GM13976 (cell line): ENCODE measurements at regions of chr3 and their contacts with region 1.

Region 1: DNA sequence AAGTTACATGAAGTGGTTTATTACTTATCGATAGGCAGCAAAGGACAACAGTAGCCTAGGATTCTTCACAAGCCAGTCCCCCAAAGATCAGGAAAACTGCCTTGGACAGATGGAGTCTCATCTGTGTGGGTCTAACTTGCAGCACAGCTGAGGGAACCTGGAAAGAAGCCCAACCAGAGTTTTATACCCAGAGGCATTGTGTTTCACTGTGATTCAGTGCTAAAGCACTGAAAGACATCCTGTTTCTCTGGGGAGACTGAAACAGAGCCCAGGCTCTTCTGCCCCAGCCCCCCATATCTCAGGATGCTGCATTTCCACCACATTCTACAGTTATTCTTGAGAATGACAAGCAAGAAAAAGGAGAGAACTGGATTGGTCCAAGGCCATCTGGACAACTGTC is 48.2 kb upstream of the PYDC2 start:
- DNase-seq: no peak
- CTCF ChIP-seq: no peak

Region 2: DNA sequence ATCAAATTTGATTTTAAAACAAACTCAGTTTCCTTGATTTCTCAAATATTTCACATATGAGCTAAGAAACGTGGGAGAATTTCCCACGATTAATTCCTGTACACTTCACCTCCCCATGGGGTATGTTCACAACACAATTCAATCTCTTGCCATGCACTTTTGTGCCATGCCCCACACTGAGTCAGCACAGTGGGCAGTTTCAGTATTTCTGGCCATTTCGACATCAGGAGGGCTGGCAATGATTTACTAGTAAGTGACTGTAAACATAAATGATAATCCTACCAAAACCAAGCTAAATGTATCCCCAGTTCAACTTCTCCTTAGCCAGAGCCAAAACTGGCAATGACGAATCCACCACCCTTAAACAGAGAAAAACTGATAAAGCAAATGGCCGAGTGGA is 1020.9 kb after region 1 on chr3:
- in situ Hi-C with region 1: loop called (anchors 10 kb)
- DNase-seq: no peak
- CTCF ChIP-seq: no peak